ENCODE measurements at regions of chr20 and their contacts with region 1.

Region 1: GRCh38 chr20:2172305-2173175 is 70.9 kb downstream of the STK35 start:
- DNase-seq: peak; percentile 90

Region 2: DNA sequence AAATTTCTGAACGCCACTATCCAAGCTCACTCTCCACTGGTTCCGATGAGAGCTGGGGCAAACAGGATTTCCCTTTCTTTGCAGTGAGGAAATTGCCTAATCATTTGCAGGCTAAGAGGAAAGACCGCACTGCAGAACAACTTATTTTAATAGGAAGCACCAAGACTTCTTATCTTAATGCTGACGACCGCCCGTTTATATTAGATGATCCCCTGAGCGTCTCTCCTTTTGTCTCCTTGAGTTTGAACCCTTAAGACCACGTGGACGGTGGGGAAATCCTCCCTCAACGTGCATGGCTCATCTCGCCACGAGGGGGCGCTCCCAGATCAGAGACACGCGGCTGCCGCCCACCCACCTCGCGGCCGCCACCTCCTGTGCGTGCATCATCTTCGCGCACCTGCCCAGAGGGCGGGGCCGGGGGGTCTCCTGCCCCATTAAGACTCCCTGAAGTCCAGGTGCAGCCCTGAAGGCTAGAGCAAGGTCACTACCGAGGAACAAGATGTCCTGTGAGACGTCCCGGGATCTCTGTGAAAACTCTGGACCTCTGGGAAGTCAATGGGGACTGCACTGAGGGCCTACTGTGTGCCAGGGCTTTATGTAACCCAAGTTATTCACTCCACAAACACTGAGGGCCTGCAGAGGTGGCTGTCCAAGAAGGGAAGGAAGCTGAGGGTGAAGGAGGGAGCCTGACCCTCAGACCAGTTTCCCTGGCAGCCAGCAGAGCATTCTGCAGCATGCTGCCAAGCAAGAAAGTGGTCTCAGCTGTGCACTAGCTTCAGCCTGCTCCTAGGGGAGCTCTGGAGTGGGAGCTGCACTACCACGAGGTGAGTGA is 206.8 kb before region 1 on chr20:
- intact Hi-C with region 1: loop called (anchors 5 kb)
- DNase-seq: peak; percentile 92

Region 3: GRCh38 chr20:2086177-2086979 is 86.2 kb before region 1 on chr20:
- intact Hi-C with region 1: loop called (anchors 10 kb)
- DNase-seq: no peak

Region 4: GRCh38 chr20:2237059-2237458 is 64.5 kb after region 1 on chr20:
- intact Hi-C with region 1: no loop called
- DNase-seq: peak; percentile 91